ENCODE measurements at regions of chr7 and their contacts with region 1.

Region 1: GRCh38 chr7:116929914-116930913 is 23.1 kb upstream of the ST7 start:
- DNase-seq: peak; percentile 83
- H3K4me3 ChIP-seq: no peak overlapping the region
- H3K27ac ChIP-seq: no peak overlapping the region
- H3K4me1 ChIP-seq: no peaks in the 10 kb centered on the region
- H3K27me3 ChIP-seq: no peaks in the 10 kb centered on the region
- CTCF ChIP-seq: peak; percentile 95

Region 2: DNA sequence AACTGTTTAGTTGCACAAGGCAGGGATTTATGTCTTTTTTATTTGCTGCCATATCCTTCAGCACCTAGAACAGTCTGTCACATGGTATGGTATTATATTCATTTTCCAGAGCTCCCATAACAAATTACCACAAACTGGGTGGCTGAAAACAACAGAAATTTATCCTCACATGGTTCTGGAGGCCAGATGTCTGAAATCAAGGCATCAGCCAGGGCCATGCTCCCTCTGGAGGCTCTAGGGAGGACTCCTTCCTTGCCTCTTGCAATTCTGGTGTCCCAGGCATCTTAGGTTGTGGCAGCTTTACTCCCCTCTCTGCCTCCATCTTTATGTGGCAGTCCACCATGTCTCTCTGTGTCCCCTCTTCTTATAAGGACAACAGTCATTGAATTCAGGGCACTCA is 215.1 kb before region 1 on chr7:
- intact Hi-C with region 1: no loop called
- DNase-seq: no peak
- H3K4me3 ChIP-seq: no peak overlapping the region
- H3K27ac ChIP-seq: no peak overlapping the region
- H3K4me1 ChIP-seq: peaks cover 11% of the 10 kb centered on the region
- H3K27me3 ChIP-seq: no peaks in the 10 kb centered on the region
- CTCF ChIP-seq: no peak

Region 3: DNA sequence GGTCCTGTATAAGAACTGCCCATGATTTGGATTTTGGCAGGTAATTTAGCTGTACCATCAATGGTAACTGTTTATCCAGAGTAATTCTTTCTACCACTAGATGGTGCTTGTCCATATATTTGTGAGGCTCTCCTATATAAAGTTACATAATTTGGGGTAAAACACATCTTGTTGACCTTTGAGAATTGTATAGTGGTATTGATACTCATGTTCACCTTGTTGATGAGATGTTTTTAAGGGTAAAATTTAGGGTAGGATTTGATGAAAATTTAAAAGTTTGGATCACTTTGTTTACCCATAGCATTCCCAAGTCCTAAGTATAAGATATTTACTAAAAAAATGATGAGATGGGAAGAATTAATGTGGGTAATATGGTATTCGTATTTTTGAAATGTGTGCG is 54.7 kb after region 1 on chr7:
- intact Hi-C with region 1: loop called (anchors 10 kb)
- DNase-seq: no peak
- H3K4me3 ChIP-seq: no peak overlapping the region
- H3K27ac ChIP-seq: no peak overlapping the region
- H3K4me1 ChIP-seq: peaks cover 32% of the 10 kb centered on the region
- H3K27me3 ChIP-seq: no peaks in the 10 kb centered on the region
- CTCF ChIP-seq: peak; percentile 79

Region 4: DNA sequence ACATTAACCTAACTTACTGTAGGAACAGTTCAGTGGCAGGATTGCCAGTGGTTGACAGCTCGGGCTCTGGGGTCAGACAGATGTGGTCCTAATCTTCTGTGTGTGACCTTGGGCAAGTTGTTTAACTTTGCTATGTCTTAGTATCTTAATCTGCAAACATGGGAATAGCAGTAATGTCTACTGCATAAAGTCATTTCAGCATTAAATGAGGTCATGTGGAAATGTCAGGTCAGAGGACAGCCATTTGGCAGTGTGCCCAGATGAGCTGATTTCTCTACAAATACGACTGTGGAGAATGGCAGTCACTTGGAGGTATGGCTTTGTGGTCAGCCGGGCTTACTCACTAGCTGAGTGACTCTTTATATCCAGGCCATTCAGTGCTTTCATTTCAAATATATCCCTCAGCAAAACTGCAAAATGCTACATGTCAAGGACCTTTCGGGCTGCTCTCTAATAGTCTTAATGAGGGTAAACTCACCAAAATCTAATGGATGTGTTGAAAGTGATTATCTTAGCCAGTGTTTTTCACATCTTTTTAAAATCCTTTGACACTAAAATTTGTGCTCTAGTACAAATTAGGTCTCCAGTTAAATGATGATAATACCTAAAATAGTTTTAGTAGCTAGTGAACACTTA is 194.5 kb after region 1 on chr7:
- intact Hi-C with region 1: loop called (anchors 5 kb)
- DNase-seq: peak; percentile 58
- H3K4me3 ChIP-seq: no peak overlapping the region
- H3K27ac ChIP-seq: peak overlapping the region; percentile 58
- H3K4me1 ChIP-seq: peaks cover 41% of the 10 kb centered on the region
- H3K27me3 ChIP-seq: no peaks in the 10 kb centered on the region
- CTCF ChIP-seq: no peak